HEK293 (cell line): ENCODE measurements at regions of chr10 and their contacts with region 1.

Region 1: GRCh38 chr10:89217057-89217990 is 10.2 kb upstream of the CH25H start:
- H3K4me3 ChIP-seq: no peak overlapping the region
- H3K27ac ChIP-seq: no peak overlapping the region
- H3K4me1 ChIP-seq: 0 out of 2 replicates have a peak, but pooled peaks cover 2% of the 10 kb centered on the region
- CTCF ChIP-seq: peak; percentile 44; the same call in 1 of the 2 replicates

Region 2: GRCh38 chr10:88990384-88991160 is 226.8 kb before region 1 on chr10 and contains the start of gene FAS:
- CTCF ChIA-PET with region 1: interaction called, 15 read pairs
- POLR2A ChIA-PET with region 1: no interaction called
- H3K4me3 ChIP-seq: peak within 1 kb of the TSS; percentile 86
- H3K27ac ChIP-seq: peak within 1 kb of the TSS; percentile 97
- H3K4me1 ChIP-seq: peaks cover 16% of the 10 kb centered on the region
- CTCF ChIP-seq: no peak

Region 3: GRCh38 chr10:89029785-89030437 is 187.4 kb before region 1 on chr10:
- CTCF ChIA-PET with region 1: interaction called, 82 read pairs
- POLR2A ChIA-PET with region 1: no interaction called
- H3K4me3 ChIP-seq: no peak overlapping the region
- H3K27ac ChIP-seq: no peak overlapping the region
- H3K4me1 ChIP-seq: 0 out of 2 replicates have a peak, but pooled peaks cover 8% of the 10 kb centered on the region
- CTCF ChIP-seq: peak; percentile 81

Region 4: GRCh38 chr10:89207181-89207800 is 10.0 kb before region 1 on chr10 and contains the start of gene CH25H:
- CTCF ChIA-PET with region 1: interaction called, 16 read pairs
- POLR2A ChIA-PET with region 1: no interaction called
- H3K4me3 ChIP-seq: peak within 1 kb of the TSS; percentile 38
- H3K27ac ChIP-seq: peak within 1 kb of the TSS; percentile 35; the same call in 1 of the 2 replicates
- H3K4me1 ChIP-seq: peaks cover 4% of the 10 kb centered on the region; the same call in 1 of the 2 replicates
- CTCF ChIP-seq: no peak

Region 5: DNA sequence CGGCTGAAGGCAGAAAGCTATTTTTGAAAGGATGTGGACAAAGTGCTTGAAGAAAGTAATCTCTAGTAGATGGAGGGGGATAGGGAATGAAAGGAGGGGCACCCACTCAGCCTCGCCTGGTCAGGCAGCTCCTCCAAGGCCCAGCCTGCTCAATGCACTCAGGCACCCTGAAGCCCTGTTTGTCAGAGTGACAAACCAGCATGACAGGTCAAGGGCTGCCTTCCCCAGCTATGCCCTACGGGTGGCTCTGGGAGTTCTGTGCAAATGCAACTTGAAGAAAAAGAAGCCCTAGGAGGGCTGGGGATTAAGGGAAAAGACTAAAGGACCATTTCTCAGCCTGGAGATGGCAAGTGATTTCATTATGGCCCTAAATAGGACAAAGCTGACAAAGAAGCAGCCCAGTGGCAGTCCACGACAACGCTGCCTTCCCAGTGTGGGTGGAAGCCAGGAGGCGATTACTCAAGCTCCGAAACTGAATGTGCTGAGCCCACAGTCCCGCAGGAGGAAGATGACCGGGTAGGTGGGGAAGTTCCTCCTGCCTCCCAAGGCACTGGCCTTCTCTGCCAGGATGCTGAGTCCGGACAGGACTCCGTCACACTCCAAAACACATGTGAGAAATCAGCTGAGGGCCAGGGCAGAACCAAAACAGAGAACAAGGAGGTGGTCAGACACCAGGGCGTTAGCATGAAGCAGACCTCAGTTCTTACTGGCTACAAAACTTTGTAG is 17.9 kb after region 1 on chr10:
- CTCF ChIA-PET with region 1: interaction called, 13 read pairs
- POLR2A ChIA-PET with region 1: no interaction called
- H3K4me3 ChIP-seq: no peak overlapping the region
- H3K27ac ChIP-seq: no peak overlapping the region
- H3K4me1 ChIP-seq: no peaks in the 10 kb centered on the region
- CTCF ChIP-seq: no peak

Region 6: GRCh38 chr10:89296220-89296648 is 78.9 kb after region 1 on chr10:
- CTCF ChIA-PET with region 1: no interaction called
- POLR2A ChIA-PET with region 1: no interaction called
- H3K4me3 ChIP-seq: no peak overlapping the region
- H3K27ac ChIP-seq: no peak overlapping the region
- H3K4me1 ChIP-seq: no peaks in the 10 kb centered on the region
- CTCF ChIP-seq: no peak